PC-9 (cell line): ENCODE measurements at regions of chr9 and their contacts with region 1.

Region 1: DNA sequence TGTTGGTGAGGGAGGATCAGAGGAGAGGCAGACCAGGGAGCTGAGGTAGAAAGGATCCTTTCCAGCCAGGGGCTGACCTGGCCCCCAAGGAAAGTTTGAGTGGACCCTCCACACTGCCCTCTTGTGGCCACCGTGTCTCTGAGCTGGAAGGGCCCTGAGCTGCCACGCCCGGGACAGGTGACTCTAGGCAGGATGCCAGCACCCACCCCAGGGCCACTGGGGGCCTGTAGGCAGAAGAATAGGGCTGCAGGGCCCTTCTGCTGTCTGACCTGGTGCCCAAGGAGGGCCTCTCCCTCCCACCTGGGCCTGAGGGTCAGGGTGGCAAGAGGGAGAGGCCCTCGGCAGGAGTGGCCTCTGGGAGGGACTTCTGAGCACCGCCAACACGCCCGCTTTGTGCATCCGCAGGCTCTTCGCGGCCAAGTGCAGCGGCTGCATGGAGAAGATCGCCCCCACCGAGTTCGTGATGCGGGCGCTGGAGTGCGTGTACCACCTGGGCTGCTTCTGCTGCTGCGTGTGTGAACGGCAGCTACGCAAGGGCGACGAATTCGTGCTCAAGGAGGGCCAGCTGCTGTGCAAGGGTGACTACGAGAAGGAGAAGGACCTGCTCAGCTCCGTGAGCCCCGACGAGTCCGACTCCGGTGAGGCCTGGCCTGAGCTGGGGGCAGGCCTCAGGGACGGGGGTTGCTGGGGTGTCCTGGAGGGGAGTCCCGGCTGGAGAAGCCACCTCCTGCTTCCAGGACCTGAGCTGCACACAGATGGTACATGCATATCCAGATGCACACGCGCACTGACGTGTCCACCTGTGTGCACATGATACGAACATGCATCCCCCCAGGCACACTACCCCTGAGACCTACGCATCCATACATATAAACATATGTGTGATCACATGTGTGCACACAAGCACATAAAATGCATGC is 77.0 kb downstream of the LMX1B start:
- DNase-seq: peak in 1 of 2 experiments; percentile 71
- H3K4me3 ChIP-seq: no peak overlapping the region
- H3K27ac ChIP-seq: no peak overlapping the region
- H3K4me1 ChIP-seq: no peaks in the 10 kb centered on the region
- H3K27me3 ChIP-seq: peaks cover 60% of the 10 kb centered on the region
- CTCF ChIP-seq: peak; percentile 83

Region 2: GRCh38 chr9:126611592-126612325 is 78.9 kb before region 1 on chr9:
- CTCF ChIA-PET with region 1: interaction called, 4 read pairs
- POLR2A ChIA-PET with region 1: no interaction called
- intact Hi-C with region 1: loop called (anchors 1 kb)
- DNase-seq: peak in 1 of 2 experiments; percentile 81
- H3K4me3 ChIP-seq: no peak overlapping the region
- H3K27ac ChIP-seq: no peak overlapping the region
- H3K4me1 ChIP-seq: no peaks in the 10 kb centered on the region
- H3K27me3 ChIP-seq: peaks cover 46% of the 10 kb centered on the region
- CTCF ChIP-seq: peak; percentile 81

Region 3: DNA sequence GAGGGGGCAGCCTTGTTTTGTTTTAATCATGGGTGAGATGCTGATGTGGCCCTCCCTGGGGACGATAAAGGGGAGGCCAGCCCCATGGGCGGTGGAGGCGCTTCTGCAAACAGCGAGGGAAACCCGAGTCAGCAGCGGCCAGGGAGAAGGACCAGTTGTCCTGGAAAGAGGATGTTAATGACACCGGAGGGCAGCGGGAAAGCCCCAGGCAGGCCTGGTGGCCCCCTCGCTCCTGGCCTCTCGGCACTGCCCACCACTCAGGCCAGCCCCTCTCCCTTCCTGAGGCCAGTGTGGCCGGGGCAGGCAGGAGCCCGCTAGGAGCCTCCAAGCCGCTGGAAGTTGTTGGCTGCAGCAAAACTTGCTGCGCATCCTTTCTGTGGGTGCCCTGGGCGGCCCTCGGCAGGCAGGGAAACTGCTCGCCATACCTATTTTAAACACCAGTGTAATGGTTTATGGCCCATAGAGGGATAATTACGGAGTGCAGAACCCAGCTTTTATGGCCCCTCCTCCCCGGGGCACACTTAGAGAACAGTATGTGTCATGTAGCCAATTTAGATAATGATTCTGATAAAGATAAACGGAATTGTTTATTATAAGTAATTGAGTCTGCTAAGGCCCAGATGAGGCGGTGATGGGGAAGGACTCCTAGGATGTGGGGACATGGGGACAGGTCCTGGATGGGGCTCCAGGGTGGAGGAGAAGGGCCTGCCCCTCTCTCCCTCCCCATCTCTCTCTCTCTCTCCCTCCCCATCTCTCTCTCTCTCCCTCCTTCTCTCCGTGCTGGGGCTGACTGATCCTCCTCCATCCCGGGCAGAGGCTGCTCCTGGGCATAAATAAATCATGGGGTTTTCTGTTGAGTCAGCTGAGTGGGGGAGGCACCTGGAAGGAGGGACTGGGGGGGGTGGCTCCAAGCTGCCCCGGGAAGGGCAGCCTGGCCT is 40.0 kb before region 1 on chr9:
- CTCF ChIA-PET with region 1: no interaction called
- POLR2A ChIA-PET with region 1: no interaction called
- intact Hi-C with region 1: no loop called
- DNase-seq: peak in 1 of 2 experiments; percentile 6
- H3K4me3 ChIP-seq: no peak overlapping the region
- H3K27ac ChIP-seq: no peak overlapping the region
- H3K4me1 ChIP-seq: no peaks in the 10 kb centered on the region
- H3K27me3 ChIP-seq: peaks cover 83% of the 10 kb centered on the region
- CTCF ChIP-seq: no peak

Region 4: GRCh38 chr9:126661521-126662220 is 29.0 kb before region 1 on chr9:
- CTCF ChIA-PET with region 1: interaction called, 3 read pairs
- POLR2A ChIA-PET with region 1: interaction called, 3 read pairs
- intact Hi-C with region 1: loop called (anchors 1 kb)
- DNase-seq: peak; percentile 85 to 92
- H3K4me3 ChIP-seq: no peak overlapping the region
- H3K27ac ChIP-seq: peak overlapping the region; percentile 55
- H3K4me1 ChIP-seq: peaks cover 45% of the 10 kb centered on the region
- H3K27me3 ChIP-seq: no peaks in the 10 kb centered on the region
- CTCF ChIP-seq: no peak; the same call in 1 of the 2 replicates

Region 5: DNA sequence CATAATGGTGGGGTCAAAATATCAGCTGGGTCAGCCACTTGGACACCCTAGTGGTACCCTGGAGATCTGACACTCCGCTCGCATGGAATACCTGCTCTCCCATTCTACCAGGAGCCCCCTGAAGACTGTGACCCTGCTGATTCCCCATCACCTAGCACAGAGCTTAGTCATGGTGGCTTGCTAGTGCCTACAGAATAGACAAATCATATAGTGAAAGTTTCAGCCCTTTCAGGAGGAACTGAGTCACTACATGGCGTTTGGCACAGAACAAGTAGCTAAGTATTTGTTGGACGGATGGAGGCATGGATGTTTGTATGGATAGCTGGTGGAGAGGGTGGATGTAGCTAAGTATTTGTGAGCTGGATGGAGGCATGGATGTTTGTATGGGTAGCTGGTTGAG is 11.7 kb before region 1 on chr9:
- CTCF ChIA-PET with region 1: interaction called, 10 read pairs
- POLR2A ChIA-PET with region 1: no interaction called
- intact Hi-C with region 1: no loop called
- DNase-seq: no peak
- H3K4me3 ChIP-seq: no peak overlapping the region
- H3K27ac ChIP-seq: no peak overlapping the region
- H3K4me1 ChIP-seq: no peaks in the 10 kb centered on the region
- H3K27me3 ChIP-seq: peaks cover 52% of the 10 kb centered on the region
- CTCF ChIP-seq: no peak